ENCODE measurements at regions of chr1 and their contacts with region 1.

Region 1: GRCh38 chr1:160244209-160244608 is 18.1 kb downstream of the DCAF8 start:
- DNase-seq: no peak
- H3K4me3 Mint-ChIP-seq: no peak overlapping the region
- H3K27ac Mint-ChIP-seq: no peak overlapping the region
- H3K4me1 Mint-ChIP-seq: peaks cover 7% of the 10 kb centered on the region
- H3K27me3 Mint-ChIP-seq: no peaks in the 10 kb centered on the region
- CTCF ChIP-seq: no peak

Region 2: DNA sequence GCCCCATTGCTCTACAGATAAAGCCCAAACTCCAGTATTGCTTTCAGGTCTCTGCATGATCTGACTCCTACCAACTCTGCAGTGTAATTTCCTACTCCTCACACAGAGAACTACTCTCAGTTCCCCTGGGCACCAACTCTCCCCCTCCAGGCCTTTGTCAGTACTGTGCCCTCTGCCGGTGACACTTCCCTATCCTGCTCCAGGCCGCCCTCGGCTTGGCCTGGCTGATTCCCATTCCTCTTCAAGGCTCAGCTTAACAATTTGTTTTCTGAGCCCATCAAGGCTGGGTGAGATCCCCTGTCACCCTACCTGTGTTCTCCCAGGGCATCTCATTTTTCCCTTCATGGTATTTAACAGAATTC is 415.0 kb before region 1 on chr1:
- CTCF ChIA-PET with region 1: no interaction called
- POLR2A ChIA-PET with region 1: no interaction called
- intact Hi-C with region 1: no loop called
- DNase-seq: peak; percentile 36
- H3K4me3 Mint-ChIP-seq: no peak overlapping the region
- H3K27ac Mint-ChIP-seq: no peak overlapping the region
- H3K4me1 Mint-ChIP-seq: peaks cover 5% of the 10 kb centered on the region
- H3K27me3 Mint-ChIP-seq: no peaks in the 10 kb centered on the region
- CTCF ChIP-seq: no peak

Region 3: DNA sequence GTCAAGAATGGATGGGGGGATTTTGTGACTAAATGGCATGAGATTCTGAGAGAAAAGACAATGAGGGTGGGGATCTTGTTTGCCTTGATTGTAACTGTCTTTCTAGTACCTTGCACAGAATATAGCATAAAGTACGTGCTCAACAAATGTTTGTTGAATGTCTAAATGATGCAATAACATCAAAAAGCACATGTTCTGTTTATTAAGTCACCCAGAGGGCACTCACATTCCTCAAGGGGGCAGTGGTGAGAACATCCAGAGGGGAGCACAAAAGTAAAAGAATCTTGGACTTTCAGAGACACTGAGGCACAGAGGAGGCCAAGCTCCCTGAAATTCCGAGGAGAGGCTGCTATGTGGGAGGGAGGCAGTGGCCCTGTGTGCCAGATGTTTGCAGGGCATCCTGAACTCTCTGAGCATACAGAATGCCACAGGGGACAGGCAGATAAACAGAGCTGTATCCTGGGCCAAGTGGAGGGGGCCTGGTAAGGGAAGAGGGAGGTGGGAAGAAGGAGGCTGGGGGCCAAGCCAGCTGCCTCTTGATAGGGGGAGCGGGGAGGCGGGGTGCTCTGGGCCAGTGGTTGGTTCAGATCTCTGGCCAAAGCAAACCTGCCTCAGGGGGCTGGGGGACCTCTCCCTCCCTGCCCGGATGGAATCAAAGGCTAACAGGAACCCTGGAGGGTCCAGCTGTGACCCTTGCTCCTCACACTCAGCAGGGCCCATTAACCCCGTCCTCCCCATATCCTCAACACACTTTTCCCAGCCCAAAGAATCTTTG is 135.1 kb before region 1 on chr1:
- CTCF ChIA-PET with region 1: interaction called, 187 read pairs
- POLR2A ChIA-PET with region 1: no interaction called
- intact Hi-C with region 1: no loop called
- DNase-seq: peak; percentile 88
- H3K4me3 Mint-ChIP-seq: no peak overlapping the region
- H3K27ac Mint-ChIP-seq: no peak overlapping the region
- H3K4me1 Mint-ChIP-seq: peaks cover 12% of the 10 kb centered on the region
- H3K27me3 Mint-ChIP-seq: no peaks in the 10 kb centered on the region
- CTCF ChIP-seq: peak; percentile 52

Region 4: DNA sequence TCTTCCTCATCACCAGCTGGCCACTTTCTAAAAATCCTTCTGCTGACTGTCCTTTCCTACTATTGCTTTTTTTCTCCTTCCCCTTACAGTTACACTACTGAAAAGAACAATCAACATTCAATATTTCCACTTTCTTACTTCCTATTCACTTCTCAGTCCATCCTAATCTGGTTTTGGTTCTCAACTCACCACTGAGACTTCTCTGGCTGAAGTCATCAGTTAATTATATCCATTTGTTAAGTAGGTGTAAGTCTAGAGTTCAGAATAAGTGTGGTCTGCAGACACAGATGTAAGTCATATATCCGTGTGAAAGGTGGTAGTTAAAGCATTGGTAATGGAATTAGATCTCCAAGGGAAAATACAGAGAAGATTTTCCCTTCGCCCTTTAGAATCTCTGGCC is 17.6 kb before region 1 on chr1:
- CTCF ChIA-PET with region 1: interaction called, 104 read pairs
- POLR2A ChIA-PET with region 1: interaction called, 13 read pairs
- intact Hi-C with region 1: no loop called
- DNase-seq: no peak
- H3K4me3 Mint-ChIP-seq: no peak overlapping the region
- H3K27ac Mint-ChIP-seq: no peak overlapping the region
- H3K4me1 Mint-ChIP-seq: no peaks in the 10 kb centered on the region
- H3K27me3 Mint-ChIP-seq: no peaks in the 10 kb centered on the region
- CTCF ChIP-seq: no peak

Region 5: GRCh38 chr1:160232911-160233310 is 11.3 kb before region 1 on chr1:
- CTCF ChIA-PET with region 1: interaction called, 104 read pairs
- POLR2A ChIA-PET with region 1: interaction called, 7 read pairs
- intact Hi-C with region 1: no loop called
- DNase-seq: no peak
- H3K4me3 Mint-ChIP-seq: no peak overlapping the region
- H3K27ac Mint-ChIP-seq: peak overlapping the region; percentile 0
- H3K4me1 Mint-ChIP-seq: no peaks in the 10 kb centered on the region
- H3K27me3 Mint-ChIP-seq: no peaks in the 10 kb centered on the region
- CTCF ChIP-seq: no peak

Region 6: GRCh38 chr1:160330129-160330528 is 85.9 kb after region 1 on chr1:
- CTCF ChIA-PET with region 1: no interaction called
- POLR2A ChIA-PET with region 1: no interaction called
- intact Hi-C with region 1: no loop called
- DNase-seq: no peak
- H3K4me3 Mint-ChIP-seq: no peak overlapping the region
- H3K27ac Mint-ChIP-seq: no peak overlapping the region
- H3K4me1 Mint-ChIP-seq: no peaks in the 10 kb centered on the region
- H3K27me3 Mint-ChIP-seq: no peaks in the 10 kb centered on the region
- CTCF ChIP-seq: no peak

Measured in MCF 10A (cell line).